Common myeloid progenitor, CD34-positive (primary cell): ENCODE measurements at regions of chr14 and their contacts with region 1.

Region 1: GRCh38 chr14:24299255-24300195 is at the starts of genes DHRS1 and NOP9:
- DNase-seq: peak; percentile 89 to 92 (median 91)
- H3K4me3 ChIP-seq: peak within 1 kb of the TSS; percentile 85 to 98 (median 92)
- H3K27ac ChIP-seq: peak within 1 kb of the TSS; percentile 75 to 83
- H3K4me1 ChIP-seq: peaks cover 7 to 36% (median 28%) of the 10 kb centered on the region in 4 experiments
- H3K27me3 ChIP-seq: no peaks in the 10 kb centered on the region

Region 2: DNA sequence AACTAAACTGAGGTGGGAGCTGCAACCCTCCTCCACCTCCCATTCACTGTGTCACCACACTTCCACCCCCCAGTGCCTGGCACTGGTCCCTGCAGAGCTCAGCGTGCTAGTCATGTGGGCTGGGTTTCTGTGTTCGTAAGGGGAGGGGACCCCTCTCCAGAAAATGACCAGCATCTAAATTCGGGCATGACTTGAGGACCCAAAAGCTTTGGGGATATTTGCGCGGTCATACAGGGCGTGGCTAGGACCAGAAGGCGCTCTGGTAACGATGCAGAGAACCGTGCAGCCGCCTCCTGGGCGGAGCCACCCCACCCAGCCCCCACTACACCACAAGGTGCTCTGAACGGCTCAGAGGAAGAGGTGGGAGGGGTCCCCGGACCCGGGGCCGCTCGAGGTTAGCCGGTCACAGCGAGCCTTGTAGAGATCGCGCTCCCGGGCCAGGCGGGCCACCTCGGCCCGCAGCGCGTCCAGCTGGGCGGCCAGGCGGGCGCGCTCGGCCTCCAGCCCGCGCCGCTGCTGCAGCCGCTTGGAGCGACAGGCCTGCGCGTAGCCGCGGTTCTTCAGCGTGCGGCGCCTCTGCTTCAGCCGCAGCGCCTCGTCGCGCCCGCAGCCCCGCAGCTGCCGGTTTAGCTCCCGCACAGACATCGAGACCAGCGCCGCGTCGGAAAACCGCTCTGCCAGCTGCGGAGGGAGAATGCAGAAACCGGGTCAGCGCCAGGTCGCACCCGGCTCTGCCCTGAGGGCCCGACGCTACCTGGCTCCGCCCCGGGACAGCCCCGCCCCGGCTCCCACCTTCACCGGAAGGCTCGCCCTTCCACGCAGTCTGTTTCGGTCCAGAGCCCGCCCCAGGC is 218.4 kb before region 1 on chr14:
- CTCF ChIA-PET with region 1: no interaction called
- POLR2A ChIA-PET with region 1: no interaction called
- DNase-seq: peak; percentile 43 to 84 (median 80)
- H3K4me3 ChIP-seq: peak overlapping the region; percentile 60 to 81 (median 67)
- H3K27ac ChIP-seq: no peak overlapping the region
- H3K4me1 ChIP-seq: peaks cover 7 to 27% (median 26%) of the 10 kb centered on the region in 4 experiments
- H3K27me3 ChIP-seq: peaks cover 0 to 12% (median 7%) of the 10 kb centered on the region in 5 experiments

Region 3: DNA sequence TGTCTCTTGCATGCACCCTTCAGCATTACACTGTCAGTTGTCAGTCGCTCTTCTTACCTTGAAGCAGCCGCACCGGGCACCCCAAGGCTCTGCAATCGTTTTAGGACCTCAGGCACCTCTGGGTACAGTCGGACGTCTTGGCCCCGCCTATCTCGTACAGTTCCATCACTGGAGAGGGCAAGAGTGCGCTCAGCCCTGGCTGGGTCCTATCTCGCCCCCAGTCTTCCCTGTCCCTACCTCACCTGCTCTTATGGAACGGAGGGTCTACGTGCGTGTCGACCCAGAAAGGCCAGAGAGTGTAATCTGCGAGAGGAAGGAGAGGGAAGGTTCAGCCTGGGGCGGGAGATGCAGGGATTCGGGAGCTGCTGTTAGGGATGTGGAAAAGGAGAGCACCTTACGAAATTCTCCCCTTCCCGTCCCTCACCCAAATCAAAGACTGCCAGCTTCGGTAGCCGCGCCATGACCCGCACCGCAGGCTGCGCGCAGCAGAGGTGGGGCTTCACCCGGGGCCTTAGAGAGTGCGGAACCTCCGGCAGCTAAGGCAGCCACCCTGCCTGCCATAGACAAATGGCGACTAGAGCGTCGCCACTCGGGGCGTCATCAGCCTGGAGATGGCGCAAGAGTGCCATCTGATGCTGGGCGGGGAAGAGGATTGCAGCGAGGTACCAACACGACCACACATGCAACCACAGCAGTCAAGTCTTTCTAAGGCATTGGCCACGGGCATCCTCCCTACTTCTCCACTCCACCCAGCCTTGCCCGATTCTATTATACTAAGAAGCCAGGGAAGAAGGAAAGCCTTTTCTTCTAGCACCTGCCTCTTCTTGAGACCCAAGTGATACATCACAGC is 83.8 kb before region 1 on chr14 and contains the start of gene MDP1:
- CTCF ChIA-PET with region 1: interaction called, 21 read pairs
- POLR2A ChIA-PET with region 1: no interaction called
- DNase-seq: peak; percentile 94 to 97 (median 96)
- H3K4me3 ChIP-seq: peak within 1 kb of the TSS; percentile 53 to 99 (median 99)
- H3K27ac ChIP-seq: peak within 1 kb of the TSS; percentile 54 to 84
- H3K4me1 ChIP-seq: peaks cover 7 to 33% (median 26%) of the 10 kb centered on the region in 4 experiments
- H3K27me3 ChIP-seq: no peaks in the 10 kb centered on the region

Region 4: DNA sequence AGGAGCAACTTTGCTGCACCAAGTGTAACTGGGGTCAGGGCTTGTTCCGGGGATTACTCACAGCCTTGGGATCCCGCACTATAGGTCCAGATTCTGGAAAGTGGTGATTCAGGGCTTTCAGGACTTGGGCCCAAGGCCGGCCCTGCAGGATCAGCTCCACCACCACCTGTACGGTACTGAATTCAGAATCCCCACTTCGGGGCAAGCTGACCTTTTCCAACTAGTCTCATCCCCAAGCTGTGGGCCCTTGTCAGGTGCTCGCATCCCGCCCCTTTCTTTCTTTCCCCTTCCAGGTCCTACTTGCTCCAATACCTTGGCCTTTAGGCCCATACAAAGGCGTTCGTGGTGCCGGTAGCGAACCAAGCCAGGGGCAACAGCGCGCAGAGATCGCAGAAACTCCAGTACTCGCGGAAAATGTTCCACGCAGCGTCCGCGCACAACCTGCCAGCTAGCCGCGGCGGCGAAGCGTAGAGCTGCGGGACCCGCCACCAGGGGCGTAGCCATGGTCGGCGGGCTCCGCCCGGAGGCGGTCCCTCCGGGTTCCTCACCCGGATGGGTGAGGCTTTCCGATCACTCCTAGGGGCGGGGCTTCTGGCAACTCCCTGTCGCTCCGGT is 57.6 kb before region 1 on chr14:
- CTCF ChIA-PET with region 1: interaction called, 207 read pairs
- POLR2A ChIA-PET with region 1: interaction called, 16 read pairs
- DNase-seq: peak; percentile 93 to 97 (median 97)
- H3K4me3 ChIP-seq: peak overlapping the region; percentile 41 to 94 (median 85)
- H3K27ac ChIP-seq: peak overlapping the region; percentile 96 to 99
- H3K4me1 ChIP-seq: peaks cover 12 to 41% (median 30%) of the 10 kb centered on the region in 4 experiments
- H3K27me3 ChIP-seq: no peaks in the 10 kb centered on the region

Region 5: GRCh38 chr14:24271134-24271833 is 28.2 kb before region 1 on chr14 and contains the start of gene RABGGTA:
- CTCF ChIA-PET with region 1: interaction called, 119 read pairs
- POLR2A ChIA-PET with region 1: interaction called, 3 read pairs
- DNase-seq: peak; percentile 93 to 96 (median 96)
- H3K4me3 ChIP-seq: peak within 1 kb of the TSS; percentile 74 to 96 (median 85)
- H3K27ac ChIP-seq: peak within 1 kb of the TSS; percentile 80 to 94
- H3K4me1 ChIP-seq: peaks cover 2 to 38% (median 18%) of the 10 kb centered on the region in 4 experiments
- H3K27me3 ChIP-seq: no peaks in the 10 kb centered on the region

Region 6: DNA sequence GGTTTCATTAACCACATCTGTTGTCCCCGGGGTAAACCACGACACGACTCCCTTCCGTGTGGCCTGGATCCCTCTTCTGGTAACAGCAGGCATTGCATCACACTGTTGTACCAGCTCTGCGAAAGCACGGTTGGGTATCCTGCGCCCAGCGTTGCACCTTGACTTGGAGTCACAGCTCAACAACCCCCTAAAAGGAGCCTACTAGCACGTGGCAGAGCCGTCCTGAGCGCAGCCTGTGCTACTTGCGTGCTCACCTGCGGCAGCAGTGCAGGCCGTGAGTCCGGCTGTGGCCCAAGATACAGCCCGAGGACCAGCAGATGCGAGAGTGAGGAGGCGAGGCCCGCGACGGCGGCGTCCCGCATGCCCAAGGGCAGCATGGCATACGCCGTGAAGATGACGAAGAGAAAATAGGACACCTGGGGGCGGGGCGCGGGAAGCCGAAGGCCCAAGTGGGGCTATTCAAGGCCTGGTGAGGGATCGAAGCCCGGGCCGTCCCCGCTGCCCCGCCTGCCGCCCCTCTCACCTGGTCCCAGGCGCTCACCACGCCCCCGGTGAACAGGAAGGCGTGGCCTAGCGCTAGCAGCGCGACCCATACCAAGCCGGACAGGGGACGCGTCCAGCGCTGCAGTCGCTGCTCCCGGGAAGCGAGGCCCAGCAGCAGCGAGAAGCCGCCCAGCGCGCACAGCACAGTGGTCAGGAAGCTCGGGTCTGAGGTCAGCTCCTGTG is 32.9 kb after region 1 on chr14:
- CTCF ChIA-PET with region 1: interaction called, 391 read pairs
- POLR2A ChIA-PET with region 1: no interaction called
- DNase-seq: peak; percentile 89 to 95 (median 94)
- H3K4me3 ChIP-seq: peak overlapping the region in 6 of 7 experiments; percentile 19 to 63 (median 30)
- H3K27ac ChIP-seq: no peak overlapping the region
- H3K4me1 ChIP-seq: peaks cover 15 to 71% (median 68%) of the 10 kb centered on the region in 4 experiments
- H3K27me3 ChIP-seq: peaks cover 0 to 34% (median 10%) of the 10 kb centered on the region in 5 experiments

Region 7: DNA sequence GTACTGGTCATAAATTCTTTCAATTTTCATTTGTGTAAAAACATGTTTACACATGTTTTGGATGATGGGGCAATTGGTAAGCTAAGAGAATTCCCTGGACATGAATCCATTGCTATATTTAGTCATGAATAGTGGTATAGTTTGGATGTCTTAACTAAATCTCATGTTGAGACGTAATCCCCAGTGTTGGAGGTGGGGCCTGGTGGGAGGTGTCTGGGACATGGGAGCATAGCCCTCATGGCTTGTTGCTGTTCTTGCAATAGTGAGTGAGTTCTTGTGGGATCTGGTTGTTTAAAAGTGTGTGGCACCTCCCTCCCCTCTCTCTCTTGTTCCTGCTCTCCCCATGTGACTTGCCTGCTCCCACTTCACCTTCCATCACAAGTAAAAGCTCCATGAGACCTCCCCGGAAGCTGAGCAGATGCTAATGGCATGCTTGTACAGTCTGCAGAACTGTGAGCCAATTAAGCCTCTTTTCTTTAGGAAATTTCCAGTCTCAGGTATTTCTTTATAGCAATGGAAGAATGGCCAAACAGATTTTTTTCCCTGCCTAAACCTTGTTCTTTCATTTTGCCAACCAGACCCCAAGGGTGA is 242.9 kb after region 1 on chr14:
- CTCF ChIA-PET with region 1: no interaction called
- POLR2A ChIA-PET with region 1: no interaction called
- DNase-seq: no peak
- H3K4me3 ChIP-seq: no peak overlapping the region
- H3K27ac ChIP-seq: no peak overlapping the region
- H3K4me1 ChIP-seq: no peaks in the 10 kb centered on the region
- H3K27me3 ChIP-seq: no peaks in the 10 kb centered on the region